ENCODE measurements at regions of chr13 and their contacts with region 1.

Region 1: DNA sequence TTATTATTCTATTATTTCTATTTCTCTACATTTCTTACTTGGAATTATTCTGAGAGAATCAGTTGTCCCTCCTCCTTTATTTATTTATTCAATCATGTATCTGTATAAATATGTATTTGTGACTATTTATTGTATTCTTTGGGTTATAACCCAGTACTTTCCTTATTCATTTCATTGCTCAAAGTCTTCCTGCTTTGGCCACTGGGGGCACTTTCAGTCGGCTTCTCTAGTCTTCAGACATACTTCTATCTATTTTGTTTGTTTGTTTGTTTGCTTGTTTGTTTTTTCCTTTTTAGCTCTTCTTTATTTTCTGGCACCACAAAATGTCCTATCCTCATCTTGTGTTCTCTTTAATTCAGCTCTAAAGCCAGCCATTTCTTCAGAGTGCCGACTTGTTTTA is 260.4 kb downstream of the NALCN start:
- DNase-seq: no peak
- H3K4me3 ChIP-seq: no peak overlapping the region
- H3K27ac ChIP-seq: no peak overlapping the region
- H3K4me1 ChIP-seq: peaks cover 4 to 11% of the 10 kb centered on the region in 2 experiments; a peak in 2 of 4 replicates
- H3K27me3 ChIP-seq: no peaks in the 10 kb centered on the region
- CTCF ChIP-seq: peak; percentile 62
- EP300 ChIP-seq: no peak
- RAD21 ChIP-seq: peak; percentile 46

Region 2: DNA sequence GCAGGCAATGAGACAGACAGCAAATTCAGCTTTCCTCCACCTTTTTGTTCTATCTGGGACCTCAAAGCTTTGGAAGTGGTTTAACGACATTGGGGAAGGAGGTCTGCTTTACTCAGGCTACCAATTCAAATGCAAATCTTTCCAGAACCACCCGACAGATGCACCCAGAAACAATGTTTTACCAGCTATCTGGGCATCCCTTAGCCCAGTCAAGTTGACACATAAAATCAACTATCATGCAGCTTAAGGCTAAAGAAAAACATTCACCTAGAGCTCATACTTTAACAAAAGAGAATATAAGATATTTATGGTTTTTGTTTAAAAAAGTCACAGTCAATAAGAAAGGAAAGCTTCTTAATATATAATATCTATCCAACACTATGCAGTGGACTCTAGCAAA is 14.4 kb after region 1 on chr13:
- CTCF ChIA-PET with region 1: interaction called, 21 read pairs
- POLR2A ChIA-PET with region 1: no interaction called
- DNase-seq: no peak
- H3K4me3 ChIP-seq: no peak overlapping the region
- H3K27ac ChIP-seq: no peak overlapping the region
- H3K4me1 ChIP-seq: no peaks in the 10 kb centered on the region; a peak in 1 of 4 replicates
- H3K27me3 ChIP-seq: no peaks in the 10 kb centered on the region
- CTCF ChIP-seq: no peak
- EP300 ChIP-seq: no peak
- RAD21 ChIP-seq: no peak

Region 3: GRCh38 chr13:101178406-101178805 is 22.5 kb after region 1 on chr13:
- CTCF ChIA-PET with region 1: interaction called, 21 read pairs
- POLR2A ChIA-PET with region 1: no interaction called
- DNase-seq: no peak
- H3K4me3 ChIP-seq: no peak overlapping the region
- H3K27ac ChIP-seq: no peak overlapping the region
- H3K4me1 ChIP-seq: no peaks in the 10 kb centered on the region
- H3K27me3 ChIP-seq: no peaks in the 10 kb centered on the region
- CTCF ChIP-seq: no peak
- EP300 ChIP-seq: no peak
- RAD21 ChIP-seq: no peak

Region 4: GRCh38 chr13:101757446-101758039 is 601.6 kb after region 1 on chr13:
- CTCF ChIA-PET with region 1: interaction called, 10 read pairs
- POLR2A ChIA-PET with region 1: no interaction called
- DNase-seq: peak; percentile 48
- H3K4me3 ChIP-seq: no peak overlapping the region; a peak in 1 of 4 replicates
- H3K27ac ChIP-seq: no peak overlapping the region
- H3K4me1 ChIP-seq: peaks cover 0 to 13% of the 10 kb centered on the region in 2 experiments; a peak in 2 of 4 replicates
- H3K27me3 ChIP-seq: no peaks in the 10 kb centered on the region
- CTCF ChIP-seq: peak; percentile 76
- EP300 ChIP-seq: no peak
- RAD21 ChIP-seq: peak; percentile 84

Measured in SK-N-SH (cell line).